Adrenal gland (tissue), 19 donors: ENCODE measurements at regions of chr4 and their contacts with region 1.

Region 1: DNA sequence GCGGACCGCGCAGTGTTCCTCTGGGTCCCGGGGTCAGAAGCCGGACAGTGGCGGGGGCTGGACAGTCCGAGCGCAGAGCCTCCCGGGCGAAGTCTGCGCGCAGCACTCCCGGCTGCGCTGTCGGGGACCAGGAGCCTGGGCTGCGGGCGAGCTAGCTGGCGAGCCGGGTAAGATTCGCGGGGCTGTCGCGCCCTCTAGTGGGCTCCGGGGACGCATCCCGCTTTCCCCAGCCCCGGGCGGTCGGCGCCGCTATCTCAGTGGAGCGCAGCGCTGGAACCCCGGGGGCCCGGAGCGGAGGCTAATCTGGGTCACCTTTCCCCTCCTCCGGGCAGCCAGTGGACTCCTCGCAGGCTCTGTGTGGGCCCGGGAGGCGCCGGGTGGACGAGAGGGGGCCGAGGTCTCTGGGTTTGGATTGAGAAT is 4.2 kb downstream of the PDGFRA start:
- DNase-seq: peak; percentile 81 to 89 (median 88)
- H3K4me3 ChIP-seq: peak overlapping the region in 2 of 4 donors; percentile 56 to 60
- H3K27ac ChIP-seq: peak overlapping the region in 3 of 5 donors; percentile 35 to 75 (median 61)
- H3K4me1 ChIP-seq: peaks cover 3 to 22% of the 10 kb centered on the region in 2 donors
- H3K27me3 ChIP-seq: peaks cover 38% of the 10 kb centered on the region
- CTCF ChIP-seq: peak; percentile 48 to 86 (median 72)
- POLR2A ChIP-seq: peak in 1 of 2 donors; percentile 13

Region 2: GRCh38 chr4:52234561-52235440 is 1998.5 kb before region 1 on chr4:
- intact Hi-C with region 1: loop called in 1 of 2 experiments (anchors 10 kb)
- DNase-seq: peak in 4 of 7 donors; percentile 2 to 53 (median 20)
- H3K4me3 ChIP-seq: no peak overlapping the region
- H3K27ac ChIP-seq: no peak overlapping the region
- H3K4me1 ChIP-seq: no peaks in the 10 kb centered on the region
- H3K27me3 ChIP-seq: no peaks in the 10 kb centered on the region
- CTCF ChIP-seq: peak; percentile 35 to 78 (median 64)
- POLR2A ChIP-seq: no peak

Region 3: GRCh38 chr4:53015681-53016080 is 1217.6 kb before region 1 on chr4:
- intact Hi-C with region 1: loop called (anchors 5 to 10 kb)
- DNase-seq: peak in 5 of 7 donors; percentile 36 to 71 (median 56)
- H3K4me3 ChIP-seq: no peak overlapping the region
- H3K27ac ChIP-seq: peak overlapping the region in 3 of 5 donors; percentile 10 to 33 (median 23)
- H3K4me1 ChIP-seq: peaks cover 55 to 80% of the 10 kb centered on the region in 2 donors
- H3K27me3 ChIP-seq: no peaks in the 10 kb centered on the region
- CTCF ChIP-seq: peak; percentile 65 to 83 (median 71)
- POLR2A ChIP-seq: no peak

Region 4: GRCh38 chr4:53205970-53206369 is 1027.3 kb before region 1 on chr4:
- intact Hi-C with region 1: loop called in 1 of 2 experiments (anchors 10 kb)
- DNase-seq: no peak
- H3K4me3 ChIP-seq: no peak overlapping the region
- H3K27ac ChIP-seq: no peak overlapping the region
- H3K4me1 ChIP-seq: no peaks in the 10 kb centered on the region
- H3K27me3 ChIP-seq: no peaks in the 10 kb centered on the region
- CTCF ChIP-seq: no peak
- POLR2A ChIP-seq: no peak

Region 5: GRCh38 chr4:53702334-53703266 is 530.7 kb before region 1 on chr4:
- intact Hi-C with region 1: loop called (anchors 5 to 10 kb)
- DNase-seq: peak; percentile 68 to 91 (median 78)
- H3K4me3 ChIP-seq: peak overlapping the region in 1 of 4 donors; percentile 41
- H3K27ac ChIP-seq: peak overlapping the region in 2 of 5 donors; percentile 58 to 84
- H3K4me1 ChIP-seq: peaks cover 11 to 22% of the 10 kb centered on the region in 2 donors
- H3K27me3 ChIP-seq: no peaks in the 10 kb centered on the region
- CTCF ChIP-seq: peak in 1 of 6 experiments; percentile 12
- POLR2A ChIP-seq: no peak

Region 6: GRCh38 chr4:53908661-53909078 is 324.6 kb before region 1 on chr4:
- intact Hi-C with region 1: loop called (anchors 5 kb)
- DNase-seq: peak; percentile 36 to 78 (median 52)
- H3K4me3 ChIP-seq: peak overlapping the region in 1 of 4 donors; percentile 28
- H3K27ac ChIP-seq: peak overlapping the region in 2 of 5 donors; percentile 30 to 36
- H3K4me1 ChIP-seq: peaks cover 0 to 13% of the 10 kb centered on the region in 2 donors
- H3K27me3 ChIP-seq: no peaks in the 10 kb centered on the region
- CTCF ChIP-seq: peak; percentile 37 to 88 (median 78)
- POLR2A ChIP-seq: no peak

Region 7: DNA sequence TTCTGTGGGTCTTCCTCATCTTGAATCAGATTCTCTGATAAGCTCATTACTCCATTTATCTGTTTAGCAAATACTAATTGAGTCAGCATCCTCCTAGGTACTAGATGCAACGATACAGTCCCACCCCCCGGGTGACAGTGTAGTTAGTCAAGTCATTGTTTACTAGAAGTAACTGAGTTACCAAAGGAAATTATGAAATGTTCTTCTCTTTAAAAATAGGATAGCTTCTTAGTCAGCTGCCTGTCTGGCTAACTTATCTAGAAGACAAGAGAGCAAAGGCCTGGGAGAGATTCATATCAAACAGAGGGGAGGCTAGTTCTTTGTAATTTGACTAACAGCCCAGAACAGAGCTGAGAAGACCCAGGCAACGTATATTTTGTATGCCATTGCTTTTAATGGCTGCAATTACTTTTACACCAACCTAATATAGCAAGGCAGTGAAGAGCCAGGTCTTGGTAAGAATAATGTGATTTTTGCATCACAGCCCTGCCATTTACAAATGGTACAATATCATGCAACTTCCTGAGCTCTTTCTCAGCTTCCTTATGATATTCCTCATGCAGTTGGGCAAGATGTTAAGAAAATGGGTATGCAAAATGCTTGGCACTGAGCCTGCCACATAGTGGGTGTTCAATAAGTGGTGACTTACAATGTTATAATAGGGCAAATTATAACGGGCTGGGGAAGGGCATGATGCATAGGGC is 318.8 kb before region 1 on chr4:
- intact Hi-C with region 1: loop called (anchors 5 kb)
- DNase-seq: peak in 1 of 7 donors; percentile 7
- H3K4me3 ChIP-seq: no peak overlapping the region
- H3K27ac ChIP-seq: no peak overlapping the region
- H3K4me1 ChIP-seq: no peaks in the 10 kb centered on the region
- H3K27me3 ChIP-seq: no peaks in the 10 kb centered on the region
- CTCF ChIP-seq: no peak
- POLR2A ChIP-seq: no peak

Region 8: DNA sequence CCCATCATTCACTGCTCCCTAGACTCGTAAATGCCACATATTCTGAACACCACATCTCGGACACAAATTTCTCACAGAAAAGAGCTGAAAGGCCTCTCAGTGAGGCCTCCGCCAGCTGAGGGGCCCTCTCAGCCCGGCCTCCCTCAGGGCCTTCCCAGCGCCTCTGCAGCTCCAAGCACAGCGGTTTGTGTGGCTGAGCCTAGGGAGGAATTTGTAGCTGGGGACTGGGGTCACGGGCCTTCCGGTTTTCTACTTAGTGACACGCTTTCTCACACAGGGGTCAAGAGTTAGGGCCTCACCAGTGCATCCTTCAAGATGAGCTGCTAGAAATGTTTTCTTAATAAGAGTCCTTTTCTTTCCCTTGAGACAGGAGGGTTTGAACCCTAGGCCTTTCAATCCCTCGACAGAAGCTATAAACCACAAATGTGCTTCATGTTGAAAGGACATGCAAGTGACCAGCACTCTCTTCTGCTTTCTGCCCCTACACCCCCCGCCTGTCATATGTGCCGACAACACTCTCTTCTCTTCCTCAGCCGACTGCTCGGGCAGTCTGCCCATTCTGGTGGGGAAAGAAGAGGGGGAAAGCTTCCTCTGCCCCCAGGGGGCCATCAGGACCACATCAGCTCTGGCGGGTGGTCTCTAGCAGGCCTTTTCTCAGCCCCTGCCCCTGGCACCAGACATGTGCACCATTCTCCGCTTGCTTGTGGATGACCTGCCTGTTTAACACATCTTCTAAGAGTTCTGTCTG is 273.7 kb before region 1 on chr4:
- intact Hi-C with region 1: no loop called
- DNase-seq: no peak
- H3K4me3 ChIP-seq: no peak overlapping the region
- H3K27ac ChIP-seq: no peak overlapping the region
- H3K4me1 ChIP-seq: no peaks in the 10 kb centered on the region
- H3K27me3 ChIP-seq: no peaks in the 10 kb centered on the region
- CTCF ChIP-seq: no peak
- POLR2A ChIP-seq: no peak

Region 9: DNA sequence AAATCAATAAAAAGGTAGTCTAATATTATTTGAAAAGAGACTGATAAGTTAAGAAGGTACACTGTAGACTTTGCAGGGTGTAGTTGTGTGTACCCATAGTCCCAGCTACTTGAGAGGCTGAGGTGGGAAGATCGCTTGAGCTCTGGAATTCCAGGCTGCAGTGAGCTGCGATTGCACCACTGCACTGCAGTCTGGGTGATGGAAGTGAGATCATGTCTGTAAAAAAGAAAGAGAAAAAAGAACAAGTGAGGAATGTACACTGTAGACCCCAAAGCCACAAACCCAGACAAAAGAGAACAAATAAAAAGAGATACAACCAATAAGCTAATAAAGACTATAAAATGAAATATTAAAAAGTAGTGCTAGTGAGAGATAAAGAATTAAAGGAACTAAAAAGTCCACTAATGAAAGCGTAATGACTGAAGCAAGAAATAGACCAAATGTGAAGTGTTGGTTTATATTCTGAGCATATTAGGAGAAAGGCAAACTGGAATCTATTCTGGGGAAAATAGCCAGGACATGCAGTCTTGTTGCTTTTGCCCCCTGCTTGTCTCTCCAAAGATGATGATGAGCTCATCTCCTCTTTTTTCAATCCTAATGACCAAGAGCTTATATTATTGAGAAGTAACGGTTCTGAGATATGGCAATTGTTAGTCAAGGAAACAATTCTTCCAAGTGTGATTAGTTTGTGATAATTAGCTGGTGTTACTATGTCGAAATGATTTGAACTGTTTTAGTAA is 114.3 kb before region 1 on chr4:
- intact Hi-C with region 1: no loop called
- DNase-seq: no peak
- H3K4me3 ChIP-seq: no peak overlapping the region
- H3K27ac ChIP-seq: no peak overlapping the region
- H3K4me1 ChIP-seq: no peaks in the 10 kb centered on the region
- H3K27me3 ChIP-seq: no peaks in the 10 kb centered on the region
- CTCF ChIP-seq: no peak
- POLR2A ChIP-seq: no peak

Region 10: DNA sequence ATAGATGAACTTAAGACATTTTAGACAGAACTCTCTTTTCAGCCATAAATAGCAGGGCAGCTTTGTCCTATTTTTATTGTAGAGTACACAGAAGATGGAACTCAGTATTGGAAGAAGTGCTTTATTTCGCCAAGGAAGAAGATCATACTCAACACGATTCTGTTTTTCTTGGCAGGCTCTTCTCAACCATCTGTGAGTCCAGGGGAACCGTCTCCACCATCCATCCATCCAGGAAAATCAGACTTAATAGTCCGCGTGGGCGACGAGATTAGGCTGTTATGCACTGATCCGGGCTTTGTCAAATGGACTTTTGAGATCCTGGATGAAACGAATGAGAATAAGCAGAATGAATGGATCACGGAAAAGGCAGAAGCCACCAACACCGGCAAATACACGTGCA is 462.1 kb after region 1 on chr4:
- intact Hi-C with region 1: no loop called
- DNase-seq: no peak
- H3K4me3 ChIP-seq: no peak overlapping the region
- H3K27ac ChIP-seq: no peak overlapping the region
- H3K4me1 ChIP-seq: no peaks in the 10 kb centered on the region
- H3K27me3 ChIP-seq: no peaks in the 10 kb centered on the region
- CTCF ChIP-seq: no peak
- POLR2A ChIP-seq: no peak